ENCODE measurements at regions of chr15 and their contacts with region 1.

Region 1: DNA sequence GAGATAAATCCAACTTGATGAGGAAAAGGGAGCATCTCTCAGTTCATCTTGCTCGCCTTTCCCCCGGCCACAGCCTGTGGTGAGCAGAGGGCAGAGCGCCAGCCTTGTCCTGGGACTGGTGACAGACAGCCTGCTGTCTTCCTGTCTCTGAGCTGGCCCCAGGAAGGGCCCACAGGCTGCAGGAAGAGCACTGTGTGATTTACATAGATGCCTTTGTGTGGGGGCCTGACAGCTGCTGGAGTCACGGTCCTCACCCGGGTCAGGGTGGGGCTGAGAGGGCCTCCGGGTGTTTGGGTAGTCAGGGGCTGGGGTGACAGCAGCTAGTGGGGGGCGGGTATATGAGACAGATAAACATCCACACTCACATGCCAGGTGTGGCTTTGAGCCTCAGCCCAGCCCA is 29.3 kb downstream of the PLA2G4D start:
- DNase-seq: no peak
- H3K4me3 ChIP-seq: no peak overlapping the region
- H3K4me3 Mint-ChIP-seq: no peak overlapping the region
- H3K27ac Mint-ChIP-seq: no peak overlapping the region
- H3K4me1 ChIP-seq: peaks cover 11% of the 10 kb centered on the region
- H3K4me1 Mint-ChIP-seq: peaks cover 6% of the 10 kb centered on the region
- H3K27me3 ChIP-seq: no peaks in the 10 kb centered on the region
- H3K27me3 Mint-ChIP-seq: no peaks in the 10 kb centered on the region
- CTCF ChIP-seq: no peak

Region 2: GRCh38 chr15:41972253-41973242 is 92.5 kb before region 1 on chr15 and contains the start of gene EHD4:
- CTCF ChIA-PET with region 1: no interaction called
- POLR2A ChIA-PET with region 1: no interaction called
- intact Hi-C with region 1: no loop called
- DNase-seq: peak; percentile 97 to 98
- H3K4me3 ChIP-seq: peak within 1 kb of the TSS; percentile 68
- H3K4me3 Mint-ChIP-seq: peak within 1 kb of the TSS; percentile 88
- H3K27ac Mint-ChIP-seq: peak within 1 kb of the TSS; percentile 96
- H3K4me1 ChIP-seq: peaks cover 34% of the 10 kb centered on the region
- H3K4me1 Mint-ChIP-seq: peaks cover 32% of the 10 kb centered on the region
- H3K27me3 ChIP-seq: no peaks in the 10 kb centered on the region
- H3K27me3 Mint-ChIP-seq: no peaks in the 10 kb centered on the region
- CTCF ChIP-seq: peak; percentile 41 to 59
- total RNA-seq, gene EHD4: 31.6 TPM in 2 replicates

Region 3: GRCh38 chr15:41989259-41989933 is 75.6 kb before region 1 on chr15:
- CTCF ChIA-PET with region 1: interaction called, 12 read pairs
- POLR2A ChIA-PET with region 1: no interaction called
- intact Hi-C with region 1: loop called (anchors 2 kb)
- DNase-seq: peak; percentile 86 to 94
- H3K4me3 ChIP-seq: no peak overlapping the region
- H3K4me3 Mint-ChIP-seq: no peak overlapping the region
- H3K27ac Mint-ChIP-seq: peak overlapping the region; percentile 29
- H3K4me1 ChIP-seq: peaks cover 18% of the 10 kb centered on the region
- H3K4me1 Mint-ChIP-seq: peaks cover 14% of the 10 kb centered on the region
- H3K27me3 ChIP-seq: no peaks in the 10 kb centered on the region
- H3K27me3 Mint-ChIP-seq: no peaks in the 10 kb centered on the region
- CTCF ChIP-seq: peak; percentile 96 to 99

Region 4: GRCh38 chr15:42084460-42085235 is 19.6 kb after region 1 on chr15:
- CTCF ChIA-PET with region 1: interaction called, 12 read pairs
- POLR2A ChIA-PET with region 1: no interaction called
- intact Hi-C with region 1: loop called (anchors 1 kb)
- DNase-seq: peak; percentile 69 to 81
- H3K4me3 ChIP-seq: no peak overlapping the region
- H3K4me3 Mint-ChIP-seq: no peak overlapping the region
- H3K27ac Mint-ChIP-seq: no peak overlapping the region
- H3K4me1 ChIP-seq: no peaks in the 10 kb centered on the region
- H3K4me1 Mint-ChIP-seq: peaks cover 8% of the 10 kb centered on the region
- H3K27me3 ChIP-seq: no peaks in the 10 kb centered on the region
- H3K27me3 Mint-ChIP-seq: no peaks in the 10 kb centered on the region
- CTCF ChIP-seq: peak; percentile 90 to 92

Region 5: DNA sequence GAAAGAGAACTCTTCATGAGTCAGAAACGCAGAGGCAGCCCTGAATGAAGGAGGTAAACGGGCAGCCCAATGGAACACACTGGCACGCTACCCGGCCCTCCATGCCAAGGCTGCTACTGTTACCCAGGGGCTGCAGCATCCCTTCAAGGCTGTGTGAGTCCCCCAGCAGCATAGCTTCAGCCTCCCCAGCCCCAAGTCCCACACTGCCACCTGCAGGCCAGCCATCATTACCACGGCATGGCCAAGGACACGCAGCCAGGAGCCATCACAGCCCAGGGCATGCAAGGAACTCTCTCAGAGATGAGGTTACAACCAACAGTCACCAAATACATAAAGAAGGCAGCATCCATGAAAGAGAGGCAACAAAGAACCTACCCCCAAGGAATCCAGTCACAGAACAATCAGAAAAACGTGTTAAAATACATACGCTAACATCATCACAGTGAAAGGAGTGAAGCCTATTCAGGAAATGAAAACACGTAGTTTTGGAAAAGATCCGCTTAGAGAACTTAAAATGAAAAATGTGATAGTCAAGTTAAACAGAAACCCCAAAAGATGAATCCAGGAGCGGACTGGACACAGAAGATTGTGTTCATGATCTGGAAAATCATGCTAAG is 69.0 kb after region 1 on chr15:
- CTCF ChIA-PET with region 1: interaction called, 3 read pairs
- POLR2A ChIA-PET with region 1: no interaction called
- intact Hi-C with region 1: loop called (anchors 1 kb)
- DNase-seq: peak; percentile 61 to 72
- H3K4me3 ChIP-seq: no peak overlapping the region
- H3K4me3 Mint-ChIP-seq: no peak overlapping the region
- H3K27ac Mint-ChIP-seq: peak overlapping the region; percentile 81
- H3K4me1 ChIP-seq: peaks cover 4% of the 10 kb centered on the region; the same call in 1 of the 2 replicates
- H3K4me1 Mint-ChIP-seq: peaks cover 7% of the 10 kb centered on the region
- H3K27me3 ChIP-seq: no peaks in the 10 kb centered on the region
- H3K27me3 Mint-ChIP-seq: peaks cover 4% of the 10 kb centered on the region
- CTCF ChIP-seq: peak; percentile 55 to 59

Region 6: DNA sequence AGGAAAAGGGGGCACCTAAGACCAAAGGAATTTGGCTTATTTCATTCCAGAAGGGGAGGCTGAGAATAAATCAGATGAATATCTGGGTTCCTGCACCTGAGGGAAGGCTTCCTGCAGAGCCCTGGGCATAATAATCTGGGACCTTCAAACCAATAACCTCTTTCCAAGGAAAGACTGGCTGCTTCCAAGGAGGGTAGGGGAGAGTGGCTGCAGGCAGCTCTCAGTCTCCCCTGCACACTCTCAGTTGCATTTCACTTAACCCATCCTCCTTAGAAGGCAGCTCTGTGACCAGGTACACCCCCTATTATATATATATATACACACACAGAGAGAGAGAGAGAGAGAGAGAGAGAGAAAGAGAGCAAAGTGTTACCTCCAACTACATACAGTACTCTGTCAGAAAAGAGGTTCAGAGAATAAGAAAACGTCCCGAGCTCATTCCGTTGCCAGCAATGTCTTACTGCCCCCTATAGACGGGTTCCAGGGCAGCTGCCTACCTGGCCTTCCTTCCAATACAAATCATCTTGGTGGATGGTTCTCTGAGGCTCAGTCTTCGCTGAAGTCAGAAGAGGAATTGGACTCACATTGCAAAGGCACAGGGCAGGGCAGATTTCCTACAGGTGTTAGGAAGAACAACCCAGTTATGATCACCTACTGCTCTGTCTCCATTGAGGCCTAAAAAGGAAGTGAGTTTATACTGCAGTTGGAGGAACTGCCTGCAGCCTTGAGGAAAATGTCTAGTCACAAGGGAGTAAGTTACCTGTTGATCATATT is 320.4 kb after region 1 on chr15:
- CTCF ChIA-PET with region 1: no interaction called
- POLR2A ChIA-PET with region 1: no interaction called
- intact Hi-C with region 1: loop called (anchors 5 kb)
- DNase-seq: peak; percentile 59 to 72
- H3K4me3 ChIP-seq: no peak overlapping the region
- H3K4me3 Mint-ChIP-seq: no peak overlapping the region
- H3K27ac Mint-ChIP-seq: no peak overlapping the region
- H3K4me1 ChIP-seq: peaks cover 4% of the 10 kb centered on the region; the same call in 1 of the 2 replicates
- H3K4me1 Mint-ChIP-seq: peaks cover 7% of the 10 kb centered on the region
- H3K27me3 ChIP-seq: no peaks in the 10 kb centered on the region
- H3K27me3 Mint-ChIP-seq: no peaks in the 10 kb centered on the region
- CTCF ChIP-seq: peak; percentile 60 to 76

Region 7: DNA sequence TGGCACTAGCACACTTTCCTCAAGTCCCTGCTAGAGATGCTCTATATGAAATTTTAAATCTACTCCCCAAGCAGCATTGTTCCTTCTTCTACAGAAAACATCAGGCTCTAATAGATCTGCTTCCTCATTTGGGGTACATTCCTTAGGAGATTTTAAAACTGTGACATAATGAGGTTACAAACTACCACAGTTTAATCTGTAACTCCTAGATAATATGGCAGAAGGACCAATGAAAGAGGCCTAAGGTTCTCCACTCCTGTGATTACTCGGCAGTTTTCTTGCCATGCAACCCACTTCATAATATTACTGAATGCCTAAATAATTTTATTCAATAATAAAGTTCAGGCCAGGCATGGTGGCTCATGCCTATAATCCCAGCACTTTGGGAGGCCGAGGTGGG is 409.8 kb after region 1 on chr15:
- CTCF ChIA-PET with region 1: no interaction called
- POLR2A ChIA-PET with region 1: no interaction called
- intact Hi-C with region 1: loop called (anchors 1 kb)
- DNase-seq: no peak
- H3K4me3 ChIP-seq: no peak overlapping the region
- H3K4me3 Mint-ChIP-seq: no peak overlapping the region
- H3K27ac Mint-ChIP-seq: no peak overlapping the region
- H3K4me1 ChIP-seq: no peaks in the 10 kb centered on the region
- H3K4me1 Mint-ChIP-seq: peaks cover 12% of the 10 kb centered on the region
- H3K27me3 ChIP-seq: no peaks in the 10 kb centered on the region
- H3K27me3 Mint-ChIP-seq: no peaks in the 10 kb centered on the region
- CTCF ChIP-seq: no peak